ENCODE measurements at regions of chr5 and their contacts with region 1.

Region 1: GRCh38 chr5:112594095-112594850 is 143.4 kb upstream of the APC start:
- DNase-seq: peak; percentile 66
- ATAC-seq: peak; percentile 62
- H3K4me3 ChIP-seq: peak overlapping the region; percentile 37
- H3K27ac ChIP-seq: peak overlapping the region; percentile 51
- H3K4me1 ChIP-seq: peaks cover 17% of the 10 kb centered on the region
- H3K27me3 ChIP-seq: no peaks in the 10 kb centered on the region
- CTCF ChIP-seq: no peak

Region 2: GRCh38 chr5:112628219-112628980 is 34.1 kb after region 1 on chr5:
- CTCF ChIA-PET with region 1: interaction called, 11 read pairs
- POLR2A ChIA-PET with region 1: no interaction called
- intact Hi-C with region 1: no loop called
- DNase-seq: no peak
- ATAC-seq: 0 out of 2 replicates have a peak, but pooled peaks have one; percentile 25
- H3K4me3 ChIP-seq: no peak overlapping the region
- H3K27ac ChIP-seq: no peak overlapping the region
- H3K4me1 ChIP-seq: peaks cover 20% of the 10 kb centered on the region
- H3K27me3 ChIP-seq: no peaks in the 10 kb centered on the region
- CTCF ChIP-seq: no peak

Region 3: GRCh38 chr5:112640546-112640945 is 46.3 kb after region 1 on chr5:
- CTCF ChIA-PET with region 1: no interaction called
- POLR2A ChIA-PET with region 1: no interaction called
- intact Hi-C with region 1: no loop called
- DNase-seq: no peak
- ATAC-seq: no peak
- H3K4me3 ChIP-seq: no peak overlapping the region
- H3K27ac ChIP-seq: no peak overlapping the region
- H3K4me1 ChIP-seq: peaks cover 16% of the 10 kb centered on the region
- H3K27me3 ChIP-seq: no peaks in the 10 kb centered on the region
- CTCF ChIP-seq: no peak

Measured in PC-3 (cell line).